Activated CD8-positive, alpha-beta T cell treated with anti-CD3 and anti-CD28 coated beads, Interleukin-2, amount 10 ng/mL, durations not matched to agents 7 days and 5 days (primary cell): ENCODE measurements at regions of chr15 and their contacts with region 1.

Region 1: GRCh38 chr15:72155635-72156616 is 37.7 kb downstream of the SENP8 start:
- DNase-seq: peak; percentile 89
- ATAC-seq: peak; percentile 96
- H3K4me3 Mint-ChIP-seq: peak overlapping the region; percentile 67
- H3K27ac Mint-ChIP-seq: peak overlapping the region; percentile 35
- H3K4me1 Mint-ChIP-seq: peaks cover 3% of the 10 kb centered on the region
- H3K27me3 Mint-ChIP-seq: peaks cover 8% of the 10 kb centered on the region

Region 2: GRCh38 chr15:71743861-71744382 is 412.0 kb before region 1 on chr15:
- CTCF ChIA-PET with region 1: interaction called, 39 read pairs
- POLR2A ChIA-PET with region 1: no interaction called
- DNase-seq: peak; percentile 71
- ATAC-seq: no peak
- H3K4me3 Mint-ChIP-seq: no peak overlapping the region
- H3K27ac Mint-ChIP-seq: no peak overlapping the region
- H3K4me1 Mint-ChIP-seq: no peaks in the 10 kb centered on the region
- H3K27me3 Mint-ChIP-seq: peaks cover 4% of the 10 kb centered on the region

Region 3: GRCh38 chr15:71752604-71753289 is 403.2 kb before region 1 on chr15:
- CTCF ChIA-PET with region 1: interaction called, 24 read pairs
- POLR2A ChIA-PET with region 1: no interaction called
- DNase-seq: peak; percentile 24
- ATAC-seq: no peak
- H3K4me3 Mint-ChIP-seq: no peak overlapping the region
- H3K27ac Mint-ChIP-seq: no peak overlapping the region
- H3K4me1 Mint-ChIP-seq: peaks cover 6% of the 10 kb centered on the region
- H3K27me3 Mint-ChIP-seq: peaks cover 17% of the 10 kb centered on the region

Region 4: DNA sequence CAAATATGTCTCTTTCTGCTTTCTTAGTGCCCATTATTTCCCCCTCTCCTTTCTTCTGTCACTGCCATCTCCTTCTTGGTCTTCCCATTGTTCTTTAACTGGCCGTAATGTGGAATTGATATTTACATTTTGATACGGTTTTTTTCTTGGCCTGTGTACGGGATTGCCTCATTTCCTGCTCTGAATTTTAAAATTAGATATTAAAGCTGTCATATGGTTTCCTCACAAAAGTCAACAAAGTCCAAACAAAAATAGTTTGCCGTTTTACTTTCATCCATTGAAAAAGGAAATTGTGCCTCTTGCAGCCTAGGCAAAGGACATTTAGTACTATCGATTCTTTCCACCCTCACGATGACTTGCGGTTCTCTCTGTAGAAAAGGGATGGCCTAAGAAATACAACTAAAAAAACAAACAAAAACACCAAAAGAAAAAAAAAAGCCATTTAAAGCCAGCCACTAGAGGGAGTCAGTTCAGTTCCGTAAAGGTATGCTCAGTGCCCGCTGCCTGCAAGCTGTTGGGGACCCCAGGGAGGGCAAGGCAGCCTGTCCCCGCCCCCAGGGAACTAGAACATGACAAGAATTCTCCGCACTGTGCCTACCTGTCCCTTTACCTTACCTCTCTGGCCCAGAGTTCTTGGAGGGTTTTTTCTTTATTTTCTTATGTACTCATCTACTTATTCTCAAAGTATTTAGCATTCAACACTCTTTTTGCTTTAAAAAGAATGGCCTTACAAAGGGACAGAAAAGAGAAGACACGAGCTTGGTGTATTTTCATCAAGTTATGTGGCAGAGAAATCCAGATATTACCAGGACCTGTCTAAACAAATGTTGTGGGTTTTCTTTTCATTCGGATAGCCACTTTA is 375.6 kb before region 1 on chr15:
- CTCF ChIA-PET with region 1: interaction called, 16 read pairs
- POLR2A ChIA-PET with region 1: no interaction called
- DNase-seq: peak; percentile 42
- ATAC-seq: peak; percentile 55
- H3K4me3 Mint-ChIP-seq: no peak overlapping the region
- H3K27ac Mint-ChIP-seq: no peak overlapping the region
- H3K4me1 Mint-ChIP-seq: peaks cover 5% of the 10 kb centered on the region
- H3K27me3 Mint-ChIP-seq: peaks cover 9% of the 10 kb centered on the region

Region 5: GRCh38 chr15:71800835-71801745 is 354.8 kb before region 1 on chr15:
- CTCF ChIA-PET with region 1: interaction called, 27 read pairs
- POLR2A ChIA-PET with region 1: no interaction called
- DNase-seq: peak; percentile 35
- ATAC-seq: no peak
- H3K4me3 Mint-ChIP-seq: no peak overlapping the region
- H3K27ac Mint-ChIP-seq: no peak overlapping the region
- H3K4me1 Mint-ChIP-seq: no peaks in the 10 kb centered on the region
- H3K27me3 Mint-ChIP-seq: peaks cover 7% of the 10 kb centered on the region

Region 6: GRCh38 chr15:72141171-72142084 is 14.5 kb before region 1 on chr15:
- CTCF ChIA-PET with region 1: interaction called, 13 read pairs
- POLR2A ChIA-PET with region 1: no interaction called
- DNase-seq: peak; percentile 35
- ATAC-seq: peak; percentile 42
- H3K4me3 Mint-ChIP-seq: no peak overlapping the region
- H3K27ac Mint-ChIP-seq: peak overlapping the region; percentile 17
- H3K4me1 Mint-ChIP-seq: peaks cover 7% of the 10 kb centered on the region
- H3K27me3 Mint-ChIP-seq: no peaks in the 10 kb centered on the region

Region 7: GRCh38 chr15:72168111-72168808 is 12.3 kb after region 1 on chr15:
- CTCF ChIA-PET with region 1: interaction called, 16 read pairs
- POLR2A ChIA-PET with region 1: interaction called, 4 read pairs
- DNase-seq: peak; percentile 67
- ATAC-seq: peak; percentile 88
- H3K4me3 Mint-ChIP-seq: peak overlapping the region; percentile 42
- H3K27ac Mint-ChIP-seq: peak overlapping the region; percentile 84
- H3K4me1 Mint-ChIP-seq: peaks cover 27% of the 10 kb centered on the region
- H3K27me3 Mint-ChIP-seq: peaks cover 9% of the 10 kb centered on the region

Region 8: GRCh38 chr15:72331021-72331420 is 175.1 kb after region 1 on chr15:
- CTCF ChIA-PET with region 1: no interaction called
- POLR2A ChIA-PET with region 1: no interaction called
- DNase-seq: no peak
- ATAC-seq: no peak
- H3K4me3 Mint-ChIP-seq: no peak overlapping the region
- H3K27ac Mint-ChIP-seq: no peak overlapping the region
- H3K4me1 Mint-ChIP-seq: no peaks in the 10 kb centered on the region
- H3K27me3 Mint-ChIP-seq: no peaks in the 10 kb centered on the region